ENCODE measurements at regions of chr18 and their contacts with region 1.

Region 1: DNA sequence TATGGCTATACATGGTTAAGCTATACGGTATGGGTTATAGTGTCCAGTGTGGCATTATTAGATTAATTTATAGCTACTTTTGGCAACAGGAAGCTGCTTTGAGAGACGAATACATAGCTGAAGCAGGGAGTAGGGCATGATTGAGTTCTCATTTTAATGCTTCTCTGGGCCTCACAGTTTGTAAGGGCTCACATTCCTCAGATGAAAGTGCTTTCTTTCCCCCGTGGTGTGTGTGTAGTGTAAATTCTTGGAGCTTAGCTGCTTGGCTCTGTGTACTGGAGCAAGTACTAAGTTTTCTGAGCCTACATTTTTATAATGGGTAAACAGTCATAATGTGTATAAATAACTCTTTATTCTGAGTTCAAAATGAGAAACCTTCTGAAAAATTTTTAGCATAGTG is 173.7 kb downstream of the PTPRM start:
- DNase-seq: no peak

Region 2: DNA sequence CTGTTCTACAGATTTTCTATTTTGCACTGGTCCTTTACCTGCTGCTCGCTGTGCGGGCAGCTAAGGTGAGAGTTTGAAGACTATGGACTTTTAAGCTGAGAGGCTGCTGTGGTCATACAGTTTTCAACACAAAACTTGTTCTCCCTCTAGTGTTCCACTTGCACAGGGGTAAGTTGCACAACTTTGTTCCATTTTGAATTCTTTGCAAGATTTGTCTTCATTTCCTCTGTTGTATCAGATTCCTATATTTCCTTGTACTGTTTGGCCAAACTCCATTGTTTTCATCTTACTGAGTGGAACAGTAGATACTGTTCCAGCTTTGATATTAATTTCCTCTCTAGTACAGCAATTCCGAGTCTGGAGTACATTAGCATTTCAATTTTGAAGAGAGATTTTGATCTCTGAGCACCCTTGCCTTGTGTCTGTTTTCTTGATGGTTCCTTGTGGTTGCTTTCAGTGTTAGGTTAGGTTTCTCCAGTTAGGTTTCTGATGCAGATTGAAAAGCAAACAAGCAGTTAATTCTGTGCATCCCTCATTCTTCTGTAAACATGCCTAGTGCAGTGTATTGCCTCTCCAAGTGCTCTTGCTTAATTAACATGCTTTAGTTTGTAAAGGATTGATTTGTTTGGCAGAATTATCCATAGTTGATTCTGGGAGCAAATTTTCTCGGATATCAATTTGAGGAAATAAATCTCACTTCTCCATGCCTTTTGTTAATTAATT is 15.1 kb after region 1 on chr18:
- intact Hi-C with region 1: loop called (anchors 1 kb)
- DNase-seq: no peak